Heart right ventricle (tissue), 16 donors: ENCODE measurements at regions of chr5 and their contacts with region 1.

Region 1: GRCh38 chr5:11273180-11273903 is 512.3 kb upstream of the DAP start:
- DNase-seq: no peak
- ATAC-seq: no peak
- H3K4me3 ChIP-seq: no peak overlapping the region
- H3K27ac ChIP-seq: no peak overlapping the region
- H3K4me1 ChIP-seq: no peaks in the 10 kb centered on the region
- H3K27me3 ChIP-seq: no peaks in the 10 kb centered on the region
- CTCF ChIP-seq: no peak

Region 2: DNA sequence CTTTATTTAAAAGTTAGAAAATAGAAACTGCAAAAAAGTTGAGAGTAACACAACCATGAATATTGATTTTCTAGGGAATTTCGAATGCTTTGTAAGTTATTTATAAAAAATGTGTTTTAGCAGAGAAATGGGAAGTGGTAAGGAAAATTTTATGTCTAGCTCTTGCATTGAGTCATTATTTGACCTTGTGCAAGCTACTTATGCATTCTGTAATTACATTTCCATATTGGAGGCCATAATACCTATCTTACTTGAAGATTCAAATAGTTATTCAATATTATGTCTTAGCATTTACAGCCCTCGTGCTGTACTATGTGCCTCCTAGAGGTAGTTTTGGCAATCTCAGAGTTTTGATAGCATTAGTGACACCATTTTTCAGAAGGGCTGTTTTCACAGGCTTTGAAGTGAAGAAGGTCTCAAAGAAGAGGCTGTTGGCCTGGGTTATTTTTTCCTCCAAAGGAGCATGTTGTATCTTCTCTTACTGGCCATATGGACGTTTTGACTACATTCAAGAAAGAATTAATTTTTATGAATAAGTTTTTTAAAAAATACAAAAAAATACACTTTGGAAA is 504.9 kb before region 1 on chr5:
- intact Hi-C with region 1: no loop called
- DNase-seq: no peak
- ATAC-seq: no peak
- H3K4me3 ChIP-seq: no peak overlapping the region
- H3K27ac ChIP-seq: no peak overlapping the region
- H3K4me1 ChIP-seq: peaks cover 0 to under 1% (median 0%) of the 10 kb centered on the region in 9 donors
- H3K27me3 ChIP-seq: no peaks in the 10 kb centered on the region
- CTCF ChIP-seq: no peak

Region 3: DNA sequence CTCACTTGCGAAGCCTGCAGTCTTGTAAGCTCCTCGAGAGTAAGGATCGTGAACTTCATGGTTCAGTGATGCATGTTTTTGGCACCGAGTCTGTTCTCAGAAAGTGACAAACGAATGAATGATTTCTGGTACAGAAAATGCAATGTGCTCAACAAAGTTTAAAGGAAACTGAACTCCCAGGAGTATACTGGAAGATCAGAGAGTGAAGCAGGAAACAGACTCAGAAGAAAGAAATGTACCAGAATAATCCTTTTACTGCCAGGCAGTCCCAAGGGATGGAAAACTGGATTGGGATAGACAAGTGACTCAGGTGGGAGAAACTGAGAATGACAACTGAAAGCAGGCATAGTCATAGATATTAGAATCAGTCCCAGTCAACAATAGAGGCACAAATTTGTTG is 210.3 kb after region 1 on chr5:
- intact Hi-C with region 1: loop called in 1 of 10 experiments (anchors 10 kb)
- DNase-seq: no peak
- ATAC-seq: no peak
- H3K4me3 ChIP-seq: no peak overlapping the region
- H3K27ac ChIP-seq: no peak overlapping the region
- H3K4me1 ChIP-seq: no peaks in the 10 kb centered on the region
- H3K27me3 ChIP-seq: no peaks in the 10 kb centered on the region
- CTCF ChIP-seq: no peak

Region 4: DNA sequence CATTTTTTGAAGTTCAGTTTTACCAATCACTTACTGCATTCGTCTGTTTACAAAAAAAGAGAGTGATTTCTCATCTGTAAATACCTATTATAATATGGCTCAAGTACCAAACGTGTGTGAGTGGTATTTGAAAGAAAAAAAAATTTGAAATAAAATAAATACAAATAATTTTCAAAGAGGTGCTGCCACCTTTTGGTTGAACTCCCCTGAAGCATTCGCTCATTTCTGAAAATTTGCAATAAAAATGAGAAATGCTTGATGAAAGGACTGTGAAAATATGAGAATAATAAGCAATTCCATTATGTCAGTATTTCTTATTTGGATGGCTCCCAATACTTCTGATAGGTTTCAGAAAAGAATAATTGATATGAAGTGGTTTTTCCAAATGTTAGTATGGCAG is 221.0 kb after region 1 on chr5:
- intact Hi-C with region 1: loop called in 4 of 10 experiments (anchors 5 to 10 kb)
- DNase-seq: no peak
- ATAC-seq: no peak
- H3K4me3 ChIP-seq: no peak overlapping the region
- H3K27ac ChIP-seq: no peak overlapping the region
- H3K4me1 ChIP-seq: no peaks in the 10 kb centered on the region
- H3K27me3 ChIP-seq: no peaks in the 10 kb centered on the region
- CTCF ChIP-seq: peak; percentile 6 to 57 (median 37)

Region 5: GRCh38 chr5:11619339-11620024 is 346.1 kb after region 1 on chr5:
- intact Hi-C with region 1: loop called in 5 of 10 experiments (anchors 1 to 10 kb)
- DNase-seq: no peak
- ATAC-seq: peak in 5 of 8 donors; percentile 46 to 82 (median 75)
- H3K4me3 ChIP-seq: no peak overlapping the region
- H3K27ac ChIP-seq: no peak overlapping the region
- H3K4me1 ChIP-seq: peaks cover 0 to 12% (median 0%) of the 10 kb centered on the region in 9 donors
- H3K27me3 ChIP-seq: no peaks in the 10 kb centered on the region
- CTCF ChIP-seq: peak in 7 of 9 donors; percentile 23 to 60 (median 47)

Region 6: DNA sequence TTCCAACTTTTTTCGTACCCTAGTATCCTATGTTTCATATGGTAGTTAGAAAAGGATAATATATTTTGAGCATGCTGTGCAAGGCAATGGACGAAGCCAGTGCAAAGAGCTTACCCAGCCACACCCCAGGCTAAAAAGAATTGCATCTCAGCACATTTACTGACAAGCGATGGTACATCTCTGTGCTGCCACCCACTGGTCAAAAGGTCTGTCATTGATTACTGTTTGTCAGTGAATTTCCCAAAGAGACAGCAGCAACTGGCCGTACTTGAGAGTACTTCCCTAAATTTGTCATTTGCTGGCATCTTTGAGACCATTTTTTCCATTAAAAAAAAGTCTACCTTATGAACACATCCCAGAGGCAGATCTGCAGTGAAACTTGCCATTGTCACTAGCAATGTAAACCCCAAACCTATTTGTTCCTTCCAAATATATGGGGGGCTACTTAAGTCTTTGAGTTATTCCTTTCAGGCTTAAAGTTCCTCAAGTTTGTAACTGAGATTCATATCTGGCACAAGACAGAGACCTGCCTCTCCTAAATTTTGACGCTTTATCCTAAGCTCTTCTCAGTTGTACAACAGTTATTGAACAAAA is 446.6 kb after region 1 on chr5:
- intact Hi-C with region 1: loop called in 1 of 10 experiments (anchors 5 kb)
- DNase-seq: peak in 1 of 2 donors; percentile 39
- ATAC-seq: peak in 4 of 8 donors; percentile 33 to 57 (median 52)
- H3K4me3 ChIP-seq: no peak overlapping the region
- H3K27ac ChIP-seq: no peak overlapping the region
- H3K4me1 ChIP-seq: no peaks in the 10 kb centered on the region
- H3K27me3 ChIP-seq: no peaks in the 10 kb centered on the region
- CTCF ChIP-seq: peak in 8 of 9 donors; percentile 11 to 54 (median 39)

Region 7: GRCh38 chr5:12023614-12024241 is 750.4 kb after region 1 on chr5:
- intact Hi-C with region 1: loop called in 1 of 10 experiments (anchors 10 kb)
- DNase-seq: no peak
- ATAC-seq: no peak
- H3K4me3 ChIP-seq: no peak overlapping the region
- H3K27ac ChIP-seq: no peak overlapping the region
- H3K4me1 ChIP-seq: no peaks in the 10 kb centered on the region
- H3K27me3 ChIP-seq: no peaks in the 10 kb centered on the region
- CTCF ChIP-seq: peak in 8 of 9 donors; percentile 31 to 72 (median 59)